Caco-2 (cell line): ENCODE measurements at regions of chr2 and their contacts with region 1.

Region 1: DNA sequence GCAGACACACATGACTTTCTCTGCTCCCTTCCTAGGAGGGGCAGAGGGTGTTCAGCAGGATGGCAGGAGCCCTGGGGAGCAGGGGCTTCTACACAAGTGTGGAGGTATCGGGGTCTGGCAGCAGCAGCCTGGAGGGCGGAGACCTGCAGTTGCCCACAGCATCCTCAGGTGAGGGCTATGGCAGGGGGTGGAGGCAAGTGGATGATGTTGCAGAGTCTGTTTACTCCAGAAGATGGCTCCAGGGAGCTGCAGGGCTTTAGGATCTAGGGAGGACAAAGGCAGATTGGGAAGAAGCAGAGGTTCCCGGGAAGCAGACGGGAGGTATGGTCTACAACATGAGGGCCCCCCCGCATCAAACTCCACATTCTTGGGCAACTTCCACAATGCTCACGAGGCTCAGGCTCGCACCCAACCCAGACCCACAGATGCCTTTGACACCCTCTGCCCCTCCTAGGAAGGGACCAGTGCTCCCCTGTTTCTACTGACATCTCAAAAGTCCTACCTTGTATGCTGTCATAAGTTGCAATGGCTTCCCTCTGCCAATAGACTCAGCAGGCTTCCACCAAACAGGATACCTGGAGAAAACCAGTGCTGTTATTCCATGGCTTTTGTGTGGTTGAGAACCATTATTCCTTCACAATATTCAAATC is 12.0 kb upstream of the ATP6V1C2 start:
- DNase-seq: peak; percentile 72 to 78
- H3K4me3 ChIP-seq: no peak overlapping the region
- H3K4me3 Mint-ChIP-seq: peak overlapping the region; percentile 17
- H3K27ac Mint-ChIP-seq: no peak overlapping the region
- H3K4me1 ChIP-seq: no peaks in the 10 kb centered on the region
- H3K4me1 Mint-ChIP-seq: peaks cover 12% of the 10 kb centered on the region
- H3K27me3 ChIP-seq: no peaks in the 10 kb centered on the region
- H3K27me3 Mint-ChIP-seq: peaks cover 9% of the 10 kb centered on the region
- CTCF ChIP-seq: peak; percentile 61 to 87

Region 2: GRCh38 chr2:10765461-10765860 is 56.0 kb after region 1 on chr2:
- CTCF ChIA-PET with region 1: no interaction called
- POLR2A ChIA-PET with region 1: no interaction called
- intact Hi-C with region 1: loop called (anchors 1 kb)
- DNase-seq: peak; percentile 86 to 95
- H3K4me3 ChIP-seq: no peak overlapping the region
- H3K4me3 Mint-ChIP-seq: peak overlapping the region; percentile 64
- H3K27ac Mint-ChIP-seq: peak overlapping the region; percentile 99
- H3K4me1 ChIP-seq: peaks cover 26% of the 10 kb centered on the region
- H3K4me1 Mint-ChIP-seq: peaks cover 15% of the 10 kb centered on the region
- H3K27me3 ChIP-seq: no peaks in the 10 kb centered on the region
- H3K27me3 Mint-ChIP-seq: no peaks in the 10 kb centered on the region
- CTCF ChIP-seq: peak in 1 of 2 experiments; percentile 11

Region 3: DNA sequence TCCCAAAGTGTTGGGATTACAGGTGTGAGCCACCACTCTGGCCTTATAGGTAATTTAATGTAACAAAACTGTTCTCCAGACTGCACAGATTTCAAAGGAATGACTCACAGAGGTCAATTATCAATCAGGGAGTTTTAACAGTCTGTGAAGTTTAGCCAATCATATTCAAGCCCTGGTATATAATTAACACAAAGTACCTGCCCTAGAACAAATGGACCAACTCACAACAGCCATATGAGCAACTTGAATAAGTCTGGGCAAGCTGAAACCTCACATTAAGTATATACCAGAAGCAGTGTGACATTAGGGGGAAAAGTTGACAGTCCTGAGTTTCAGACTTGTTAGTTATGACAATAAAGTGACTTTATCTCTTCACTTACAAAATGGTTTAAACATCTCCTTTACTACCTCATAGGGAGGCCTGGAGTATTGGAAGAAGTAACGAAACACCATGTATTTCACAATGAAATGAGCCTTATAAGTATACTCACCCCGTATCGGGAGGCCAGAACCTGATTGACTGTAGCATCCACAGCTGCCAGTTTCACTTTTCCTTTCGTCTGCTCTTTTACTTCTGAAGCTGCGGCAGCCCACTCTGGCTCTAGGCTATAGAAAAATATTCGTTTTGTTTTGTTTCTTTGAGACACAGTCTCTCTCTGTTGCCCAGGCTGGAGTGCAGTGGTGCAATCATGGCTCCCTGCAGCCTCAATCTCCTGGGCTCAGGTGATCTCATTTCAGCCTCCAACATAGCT is 81.0 kb after region 1 on chr2:
- CTCF ChIA-PET with region 1: no interaction called
- POLR2A ChIA-PET with region 1: no interaction called
- intact Hi-C with region 1: loop called (anchors 2 kb)
- DNase-seq: no peak
- H3K4me3 ChIP-seq: no peak overlapping the region
- H3K4me3 Mint-ChIP-seq: no peak overlapping the region
- H3K27ac Mint-ChIP-seq: peak overlapping the region; percentile 62
- H3K4me1 ChIP-seq: peaks cover 16% of the 10 kb centered on the region
- H3K4me1 Mint-ChIP-seq: peaks cover 12% of the 10 kb centered on the region
- H3K27me3 ChIP-seq: no peaks in the 10 kb centered on the region
- H3K27me3 Mint-ChIP-seq: no peaks in the 10 kb centered on the region
- CTCF ChIP-seq: no peak

Region 4: GRCh38 chr2:10812362-10813162 is 103.1 kb after region 1 on chr2 and contains the start of gene PDIA6:
- CTCF ChIA-PET with region 1: no interaction called
- POLR2A ChIA-PET with region 1: interaction called, 3 read pairs
- intact Hi-C with region 1: loop called (anchors 1 kb)
- DNase-seq: peak; percentile 98 to 99
- H3K4me3 ChIP-seq: peak within 1 kb of the TSS; percentile 83
- H3K4me3 Mint-ChIP-seq: peak within 1 kb of the TSS; percentile 81
- H3K27ac Mint-ChIP-seq: peak within 1 kb of the TSS; percentile 83
- H3K4me1 ChIP-seq: peaks cover 8% of the 10 kb centered on the region; the same call in 1 of the 2 replicates
- H3K4me1 Mint-ChIP-seq: peaks cover 22% of the 10 kb centered on the region
- H3K27me3 ChIP-seq: no peaks in the 10 kb centered on the region
- H3K27me3 Mint-ChIP-seq: peaks cover 5% of the 10 kb centered on the region
- CTCF ChIP-seq: no peak
- total RNA-seq, gene PDIA6: 379 and 384 TPM in 2 replicates

Region 5: GRCh38 chr2:11124503-11125068 is 415.2 kb after region 1 on chr2:
- CTCF ChIA-PET with region 1: no interaction called
- POLR2A ChIA-PET with region 1: no interaction called
- intact Hi-C with region 1: loop called (anchors 10 kb)
- DNase-seq: peak; percentile 76 to 88
- H3K4me3 ChIP-seq: no peak overlapping the region
- H3K4me3 Mint-ChIP-seq: no peak overlapping the region
- H3K27ac Mint-ChIP-seq: no peak overlapping the region
- H3K4me1 ChIP-seq: peaks cover 3% of the 10 kb centered on the region; the same call in 1 of the 2 replicates
- H3K4me1 Mint-ChIP-seq: peaks cover 7% of the 10 kb centered on the region
- H3K27me3 ChIP-seq: no peaks in the 10 kb centered on the region
- H3K27me3 Mint-ChIP-seq: no peaks in the 10 kb centered on the region
- CTCF ChIP-seq: peak; percentile 88 to 89